Mammary epithelial cell (primary cell): ENCODE measurements at regions of chrX and their contacts with region 1.

Region 1: GRCh38 chrX:120603707-120604360 is at the start of gene MCTS1:
- DNase-seq: peak; percentile 94
- H3K4me3 ChIP-seq: peak within 1 kb of the TSS; percentile 61 to 76 (median 69)
- H3K27ac ChIP-seq: peak within 1 kb of the TSS; percentile 82
- H3K4me1 ChIP-seq: no peaks in the 10 kb centered on the region
- H3K27me3 ChIP-seq: no peaks in the 10 kb centered on the region
- CTCF ChIP-seq: no peak
- total RNA-seq, gene MCTS1: 23.7 to 50.0 TPM

Region 2: DNA sequence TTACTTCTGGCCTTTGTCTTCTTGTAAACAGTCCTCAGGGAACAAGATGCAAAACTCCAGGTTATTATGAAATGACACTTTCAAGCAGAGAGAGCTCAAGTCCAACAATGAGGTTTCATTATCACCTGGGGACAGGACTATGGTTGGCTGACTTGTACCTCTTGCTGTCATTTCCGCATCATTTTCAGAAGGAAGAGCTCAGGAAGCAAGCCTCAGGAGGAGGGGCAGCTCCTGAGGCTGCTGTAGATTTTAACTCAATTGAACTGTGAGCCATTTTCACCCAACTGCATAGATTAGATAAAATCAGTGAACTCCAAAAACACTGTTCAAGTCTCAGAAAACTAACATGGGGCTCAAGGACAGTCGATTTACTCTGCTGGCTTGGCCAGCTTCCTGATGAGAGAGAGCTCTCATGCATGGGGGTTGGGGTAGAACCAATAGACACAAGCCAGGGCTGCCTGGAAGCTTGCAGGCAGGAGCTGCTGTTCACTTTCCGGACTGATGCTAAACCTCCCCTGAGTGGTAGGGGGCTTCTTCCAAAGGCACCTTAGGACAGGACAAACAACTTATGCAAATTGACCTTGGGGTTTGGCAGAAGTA is 316.2 kb before region 1 on chrX:
- CTCF ChIA-PET with region 1: no interaction called
- dilution Hi-C with region 1: no loop called
- in situ Hi-C with region 1: no loop called
- intact Hi-C with region 1: no loop called
- DNase-seq: no peak
- H3K4me3 ChIP-seq: no peak overlapping the region
- H3K27ac ChIP-seq: no peak overlapping the region
- H3K4me1 ChIP-seq: no peaks in the 10 kb centered on the region
- H3K27me3 ChIP-seq: no peaks in the 10 kb centered on the region
- CTCF ChIP-seq: no peak

Region 3: DNA sequence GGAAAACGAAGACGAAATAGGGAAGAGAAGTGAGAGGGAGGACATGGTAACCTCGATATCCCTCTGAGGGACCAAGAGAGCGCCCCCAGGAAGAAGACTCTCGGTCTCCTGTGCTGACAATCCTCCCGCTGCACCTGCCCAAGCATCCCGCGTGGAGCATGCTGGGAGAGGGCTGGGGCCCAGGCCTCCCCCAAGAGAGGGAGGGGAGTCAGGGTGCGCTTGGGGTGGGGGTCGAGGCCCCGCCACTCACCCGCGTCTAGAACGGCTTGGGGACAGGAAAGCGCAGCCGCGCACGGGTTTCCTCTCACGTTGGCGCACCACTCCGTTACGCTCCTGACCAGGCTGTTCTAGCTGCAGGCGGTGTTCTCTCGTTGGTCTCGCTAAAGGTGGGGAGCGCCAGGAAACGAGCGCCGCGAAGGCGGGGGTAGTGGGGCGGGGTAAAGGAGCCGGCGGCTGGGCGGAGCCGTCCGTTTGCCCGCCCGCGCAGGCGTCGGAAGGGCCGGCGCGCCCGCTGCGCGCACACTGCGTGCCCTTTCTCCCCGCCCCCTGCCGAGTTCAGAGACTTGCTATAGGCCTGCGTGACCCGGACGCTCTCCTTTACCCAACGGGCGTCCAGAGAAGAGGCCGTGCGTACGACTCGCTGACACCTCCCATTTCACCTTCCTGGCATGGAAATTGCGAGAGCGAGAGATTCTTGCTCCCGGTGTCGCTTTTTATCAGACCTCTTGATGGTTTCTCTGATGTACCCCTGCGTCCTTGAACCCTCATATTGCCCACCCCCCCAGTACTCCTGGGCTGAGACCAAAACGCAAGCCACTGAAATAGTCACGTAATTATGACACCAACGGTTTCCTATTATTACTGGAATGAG is 26.1 kb after region 1 on chrX and contains the start of gene C1GALT1C1:
- CTCF ChIA-PET with region 1: no interaction called
- dilution Hi-C with region 1: no loop called
- in situ Hi-C with region 1: no loop called
- intact Hi-C with region 1: no loop called
- DNase-seq: peak; percentile 90
- H3K4me3 ChIP-seq: peak within 1 kb of the TSS; percentile 52 to 70 (median 69)
- H3K27ac ChIP-seq: peak within 1 kb of the TSS; percentile 59
- H3K4me1 ChIP-seq: no peaks in the 10 kb centered on the region
- H3K27me3 ChIP-seq: no peaks in the 10 kb centered on the region
- CTCF ChIP-seq: peak in 1 of 2 donors; percentile 1
- total RNA-seq, gene C1GALT1C1: 10.4 to 17.0 TPM

Region 4: GRCh38 chrX:121084903-121085611 is 481.2 kb after region 1 on chrX:
- CTCF ChIA-PET with region 1: interaction called, 13 read pairs
- dilution Hi-C with region 1: no loop called
- in situ Hi-C with region 1: no loop called
- intact Hi-C with region 1: no loop called
- DNase-seq: no peak
- H3K4me3 ChIP-seq: no peak overlapping the region
- H3K27ac ChIP-seq: no peak overlapping the region
- H3K4me1 ChIP-seq: no peaks in the 10 kb centered on the region
- H3K27me3 ChIP-seq: no peaks in the 10 kb centered on the region
- CTCF ChIP-seq: no peak

Region 5: DNA sequence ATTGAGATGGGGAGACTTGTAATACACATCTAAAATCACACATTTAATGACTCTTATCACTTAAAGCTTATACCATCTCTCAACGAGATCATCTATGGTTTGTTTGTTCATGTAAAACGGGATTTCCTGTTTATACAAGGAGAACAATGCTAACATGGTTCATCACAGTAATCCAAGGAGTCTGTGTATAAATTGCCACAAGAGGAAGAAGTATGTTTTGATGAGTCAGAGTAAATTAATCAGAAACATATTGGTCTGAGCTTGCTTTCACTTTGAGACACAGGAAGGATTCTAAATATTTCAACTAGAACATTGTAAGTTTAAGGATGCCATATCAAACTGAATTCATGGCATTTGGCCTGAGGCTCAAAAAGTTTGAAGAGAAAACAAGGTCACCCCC is 1037.7 kb after region 1 on chrX:
- CTCF ChIA-PET with region 1: interaction called, 11 read pairs
- dilution Hi-C with region 1: no loop called
- in situ Hi-C with region 1: no loop called
- intact Hi-C with region 1: no loop called
- DNase-seq: peak; percentile 53
- H3K4me3 ChIP-seq: no peak overlapping the region
- H3K27ac ChIP-seq: peak overlapping the region; percentile 42
- H3K4me1 ChIP-seq: peaks cover 11% of the 10 kb centered on the region
- H3K27me3 ChIP-seq: no peaks in the 10 kb centered on the region
- CTCF ChIP-seq: no peak